Activated CD4-positive, alpha-beta memory T cell treated with anti-CD3 and anti-CD28 coated beads for 36 hours (primary cell): ENCODE measurements at regions of chr1 and their contacts with region 1.

Region 1: GRCh38 chr1:40404670-40405462 is 31.3 kb downstream of the SMAP2 start:
- DNase-seq: peak; percentile 49
- H3K4me3 Mint-ChIP-seq: peak overlapping the region; percentile 52
- H3K27ac Mint-ChIP-seq: peak overlapping the region; percentile 88
- H3K4me1 Mint-ChIP-seq: peaks cover 72% of the 10 kb centered on the region
- H3K27me3 Mint-ChIP-seq: no peaks in the 10 kb centered on the region

Region 2: GRCh38 chr1:40040511-40041465 is 364.1 kb before region 1 on chr1 and contains the start of gene CAP1:
- CTCF ChIA-PET with region 1: no interaction called
- POLR2A ChIA-PET with region 1: no interaction called
- intact Hi-C with region 1: loop called (anchors 5 kb)
- DNase-seq: peak; percentile 100
- H3K4me3 Mint-ChIP-seq: peak within 1 kb of the TSS; percentile 92
- H3K27ac Mint-ChIP-seq: peak within 1 kb of the TSS; percentile 98
- H3K4me1 Mint-ChIP-seq: peaks cover 54% of the 10 kb centered on the region
- H3K27me3 Mint-ChIP-seq: no peaks in the 10 kb centered on the region
- total RNA-seq, gene CAP1: 616 to 633 TPM

Region 3: DNA sequence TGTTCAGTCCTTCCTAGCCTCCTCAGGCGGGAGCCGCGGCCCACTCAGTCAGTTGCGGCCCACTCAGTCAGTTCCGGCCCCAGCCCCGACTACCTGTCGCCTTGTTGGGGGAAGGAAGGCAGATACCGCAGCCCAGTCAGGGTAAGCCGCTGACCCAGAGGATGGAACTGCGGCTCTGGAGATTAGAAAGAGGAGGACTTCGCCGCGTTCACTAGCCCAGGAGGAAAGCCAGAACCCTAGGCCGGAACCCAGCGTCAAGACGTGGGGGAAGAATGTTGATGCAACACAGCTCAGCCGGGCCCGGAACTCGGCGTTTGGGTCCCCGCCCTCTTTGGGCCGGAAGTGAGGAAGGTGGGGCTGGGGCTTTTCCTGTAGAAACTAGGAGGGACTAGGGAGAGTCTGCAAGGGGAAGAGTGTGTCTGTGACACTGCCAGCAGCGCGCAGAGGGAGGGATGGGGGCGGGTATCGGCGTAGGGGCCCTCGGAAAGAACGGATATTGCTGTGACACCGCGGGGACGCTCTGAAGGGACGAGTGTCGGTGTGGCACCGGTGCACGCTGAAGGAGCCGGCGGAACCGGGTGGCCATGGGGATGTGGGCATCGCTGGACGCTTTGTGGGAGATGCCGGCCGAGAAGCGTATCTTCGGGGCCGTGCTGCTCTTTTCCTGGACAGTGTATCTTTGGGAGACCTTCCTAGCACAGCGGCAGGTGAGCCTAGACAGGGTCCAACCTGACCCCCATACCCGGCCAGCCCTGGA is 147.0 kb before region 1 on chr1 and contains the start of gene ZMPSTE24:
- CTCF ChIA-PET with region 1: no interaction called
- POLR2A ChIA-PET with region 1: no interaction called
- intact Hi-C with region 1: loop called (anchors 5 kb)
- DNase-seq: peak; percentile 98
- H3K4me3 Mint-ChIP-seq: peak within 1 kb of the TSS; percentile 86
- H3K27ac Mint-ChIP-seq: peak within 1 kb of the TSS; percentile 97
- H3K4me1 Mint-ChIP-seq: peaks cover 54% of the 10 kb centered on the region
- H3K27me3 Mint-ChIP-seq: no peaks in the 10 kb centered on the region
- total RNA-seq, gene ZMPSTE24: 29.5 to 30.5 TPM

Region 4: DNA sequence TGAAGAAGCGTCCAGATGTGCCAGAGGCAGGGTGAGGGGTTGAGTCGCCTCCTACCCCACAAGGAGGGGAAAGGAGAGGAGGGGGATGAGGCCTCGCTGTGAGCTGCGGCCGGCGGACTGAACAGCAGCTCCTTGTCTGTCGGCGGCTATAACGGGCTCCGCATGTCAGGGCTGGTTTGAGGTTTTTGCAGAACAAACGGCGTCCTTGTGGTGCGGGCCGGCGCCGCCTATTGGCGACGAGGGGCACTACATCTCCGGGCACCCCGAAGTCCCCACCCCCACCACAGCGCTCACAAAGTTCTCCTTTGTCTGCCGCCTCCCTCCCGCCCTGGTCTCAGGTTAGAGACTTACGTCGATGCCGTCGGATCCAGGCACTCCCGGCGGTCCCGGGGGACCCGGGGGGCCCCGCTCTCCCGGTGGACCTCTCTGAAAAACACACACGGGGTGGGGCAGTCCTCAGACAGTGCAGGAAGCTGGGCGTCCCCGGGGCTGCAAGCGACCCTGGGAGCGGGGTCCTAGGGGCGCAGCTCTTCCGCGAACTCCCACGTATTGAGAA is 89.5 kb before region 1 on chr1:
- CTCF ChIA-PET with region 1: interaction called, 40 read pairs
- POLR2A ChIA-PET with region 1: no interaction called
- intact Hi-C with region 1: no loop called
- DNase-seq: peak; percentile 91
- H3K4me3 Mint-ChIP-seq: peak overlapping the region; percentile 85
- H3K27ac Mint-ChIP-seq: no peak overlapping the region
- H3K4me1 Mint-ChIP-seq: peaks cover 47% of the 10 kb centered on the region
- H3K27me3 Mint-ChIP-seq: peaks cover 9% of the 10 kb centered on the region

Region 5: DNA sequence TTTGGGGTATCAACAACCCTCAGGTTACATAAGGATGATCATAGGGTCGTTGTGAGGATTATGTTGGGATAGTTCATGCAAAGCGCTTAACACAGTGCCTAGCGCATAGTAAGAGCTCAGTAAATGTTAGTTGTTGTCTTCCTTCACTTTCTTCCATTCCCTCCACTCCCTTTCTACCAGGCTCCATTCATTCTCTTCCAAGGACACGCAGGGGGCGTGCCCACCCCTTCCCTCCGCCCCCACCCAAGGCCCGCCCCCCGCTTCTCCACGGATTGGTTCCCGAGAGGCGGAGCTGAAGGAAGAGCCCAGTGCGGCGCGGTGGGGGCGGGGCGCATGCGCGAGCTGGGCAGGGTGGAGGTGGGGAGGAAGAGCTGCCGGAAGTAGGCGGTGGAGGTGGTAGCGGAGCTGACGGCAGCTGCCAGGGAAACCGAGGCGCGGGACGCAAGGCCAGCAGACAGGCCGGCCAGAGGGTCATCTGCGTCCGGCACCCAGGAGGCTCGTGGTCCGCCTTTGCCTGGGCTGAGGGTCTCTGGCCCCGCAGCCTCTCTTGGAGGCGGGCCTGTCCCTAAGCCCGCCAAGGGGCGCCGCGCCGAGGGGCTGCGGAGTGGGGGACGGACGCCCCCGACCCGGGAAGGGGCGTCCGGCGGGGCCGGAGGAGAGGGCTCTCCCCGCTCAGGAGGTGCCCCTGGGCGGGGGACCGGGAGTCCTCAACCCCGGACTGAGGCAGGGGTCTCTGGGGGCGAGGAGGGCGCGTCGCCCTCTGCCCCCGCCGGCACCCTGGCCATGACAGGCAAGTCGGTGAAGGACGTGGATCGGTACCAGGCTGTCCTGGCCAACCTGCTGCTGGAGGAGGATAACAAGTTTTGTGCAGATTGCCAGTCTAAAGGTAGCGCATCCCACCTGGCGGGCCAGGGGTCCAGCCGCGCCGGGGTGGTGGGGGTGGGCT is 31.3 kb before region 1 on chr1 and contains the start of gene SMAP2:
- CTCF ChIA-PET with region 1: interaction called, 32 read pairs
- POLR2A ChIA-PET with region 1: interaction called, 29 read pairs
- intact Hi-C with region 1: no loop called
- DNase-seq: peak; percentile 98
- H3K4me3 Mint-ChIP-seq: peak within 1 kb of the TSS; percentile 97
- H3K27ac Mint-ChIP-seq: peak within 1 kb of the TSS; percentile 99
- H3K4me1 Mint-ChIP-seq: peaks cover 44% of the 10 kb centered on the region
- H3K27me3 Mint-ChIP-seq: peaks cover 1% of the 10 kb centered on the region
- total RNA-seq, gene SMAP2: 250 to 254 TPM

Region 6: DNA sequence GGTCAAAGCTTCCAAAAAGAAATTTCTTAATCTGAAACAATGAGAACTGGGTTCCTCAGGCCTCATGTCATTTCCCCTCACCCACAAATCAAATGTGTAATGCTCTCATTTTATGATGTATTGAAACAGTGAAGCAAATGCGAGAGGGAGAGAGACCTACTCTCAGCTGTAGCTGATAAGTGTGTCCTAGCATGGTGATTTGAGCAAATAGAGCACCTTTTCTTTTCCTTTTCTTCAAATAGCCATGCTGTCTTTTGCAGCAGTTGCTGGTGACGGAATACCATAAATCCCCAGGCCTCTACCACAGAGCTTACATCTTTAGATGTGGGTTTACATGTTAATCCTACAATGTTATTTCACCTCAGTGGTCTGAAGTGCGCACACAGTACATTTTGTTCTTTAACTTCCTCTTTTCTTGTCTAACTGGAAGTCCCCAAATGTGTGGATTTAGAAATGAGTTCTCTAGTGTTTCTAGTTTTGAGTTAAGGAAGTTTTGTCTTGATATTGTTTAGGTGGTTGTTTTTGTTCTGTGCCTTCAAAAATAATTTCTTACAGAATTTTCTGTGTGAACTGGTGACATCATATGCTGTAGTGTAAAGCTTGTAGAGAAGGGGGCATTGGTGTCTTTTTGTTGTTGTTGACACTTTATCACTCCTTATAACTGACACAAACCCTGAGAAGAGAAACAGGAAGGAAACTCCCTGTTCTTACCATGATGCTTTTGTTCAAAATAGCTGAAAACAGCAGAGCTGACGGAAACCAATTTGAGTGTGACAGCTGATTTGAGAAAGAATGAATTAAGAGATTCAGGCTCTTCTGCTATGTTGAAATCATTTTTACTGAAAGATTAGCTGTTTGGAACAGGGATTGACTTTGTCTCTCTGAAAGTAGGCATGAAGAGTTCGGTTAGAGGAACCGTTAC is 19.2 kb before region 1 on chr1:
- CTCF ChIA-PET with region 1: interaction called, 74 read pairs
- POLR2A ChIA-PET with region 1: interaction called, 160 read pairs
- intact Hi-C with region 1: loop called (anchors 1 kb)
- DNase-seq: peak; percentile 77
- H3K4me3 Mint-ChIP-seq: peak overlapping the region; percentile 81
- H3K27ac Mint-ChIP-seq: peak overlapping the region; percentile 100
- H3K4me1 Mint-ChIP-seq: peaks cover 90% of the 10 kb centered on the region
- H3K27me3 Mint-ChIP-seq: no peaks in the 10 kb centered on the region

Region 7: DNA sequence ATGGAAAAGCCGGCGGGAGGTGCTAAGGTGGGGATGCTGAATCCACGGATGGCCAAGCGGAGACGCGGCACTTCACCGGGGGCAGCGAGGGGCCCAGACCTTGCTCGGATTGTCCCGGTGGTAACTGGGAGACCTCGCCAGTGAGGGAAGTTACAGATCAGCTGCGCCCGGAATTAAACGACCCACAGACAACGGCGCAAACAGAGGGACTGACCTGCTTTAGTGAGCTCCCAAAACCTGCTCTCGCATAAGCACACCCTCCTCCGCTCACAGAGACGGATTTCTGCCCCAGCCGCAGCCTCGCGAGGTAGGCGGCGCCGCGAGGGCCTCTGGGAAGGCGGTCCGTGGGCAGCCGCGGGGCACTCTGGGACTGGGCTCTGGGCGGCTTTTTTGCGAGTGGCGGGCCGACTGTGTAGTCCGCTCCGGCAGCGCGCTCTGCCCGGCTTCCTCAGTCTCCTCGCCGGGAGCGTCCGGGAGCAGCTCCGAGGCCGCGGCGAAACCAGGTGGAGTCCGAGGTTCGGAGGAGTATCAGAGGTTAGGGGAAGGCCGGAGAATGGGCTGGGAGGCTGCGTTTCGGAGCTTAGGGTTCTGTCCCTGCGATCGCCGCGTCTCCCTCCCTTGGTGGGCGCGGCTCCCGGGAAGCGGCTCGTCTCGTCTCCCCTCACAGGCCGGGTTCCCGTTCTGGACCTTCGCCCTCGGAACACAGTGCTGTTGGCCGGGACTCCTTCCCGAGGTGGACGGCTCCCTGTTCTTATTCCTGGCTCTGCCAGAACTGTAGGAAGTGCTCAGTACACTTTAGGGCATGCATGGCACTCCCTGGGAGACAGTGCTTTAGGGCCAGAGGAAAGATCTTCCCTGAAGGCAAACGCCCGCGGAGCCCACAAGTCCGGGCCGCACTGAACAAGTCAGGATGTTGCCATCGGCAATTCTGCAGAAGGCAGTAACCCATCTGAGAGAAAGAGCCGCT is 103.8 kb after region 1 on chr1 and contains the start of gene EXO5:
- CTCF ChIA-PET with region 1: no interaction called
- POLR2A ChIA-PET with region 1: no interaction called
- intact Hi-C with region 1: no loop called
- DNase-seq: peak; percentile 92
- H3K4me3 Mint-ChIP-seq: peak within 1 kb of the TSS; percentile 77
- H3K27ac Mint-ChIP-seq: peak within 1 kb of the TSS; percentile 78
- H3K4me1 Mint-ChIP-seq: peaks cover 11% of the 10 kb centered on the region
- H3K27me3 Mint-ChIP-seq: no peaks in the 10 kb centered on the region
- total RNA-seq, gene EXO5: 9.7 to 11.7 TPM

Region 8: DNA sequence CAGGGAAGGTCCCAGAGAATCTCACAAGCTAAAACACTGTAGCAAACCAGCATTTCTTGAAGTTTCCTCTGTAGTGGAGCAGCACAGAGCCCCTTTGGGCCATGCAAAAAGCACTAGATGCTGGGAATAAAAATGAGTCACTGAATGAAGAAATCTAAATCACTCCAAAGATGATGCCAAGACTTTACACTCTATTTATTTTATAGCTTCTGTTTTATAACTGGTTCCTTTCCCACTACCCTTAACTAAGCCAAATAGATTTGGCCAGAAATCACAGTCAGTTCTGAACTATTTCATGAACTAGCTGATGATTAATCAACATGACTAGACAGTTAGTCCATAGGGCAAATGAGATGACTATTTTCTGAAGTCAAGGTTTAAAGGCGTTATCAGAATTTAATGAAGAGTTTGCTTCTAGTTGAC is 747.8 kb after region 1 on chr1:
- CTCF ChIA-PET with region 1: no interaction called
- POLR2A ChIA-PET with region 1: no interaction called
- intact Hi-C with region 1: no loop called
- DNase-seq: no peak
- H3K4me3 Mint-ChIP-seq: no peak overlapping the region
- H3K27ac Mint-ChIP-seq: no peak overlapping the region
- H3K4me1 Mint-ChIP-seq: no peaks in the 10 kb centered on the region
- H3K27me3 Mint-ChIP-seq: no peaks in the 10 kb centered on the region